ENCODE measurements at regions of chr10 and their contacts with region 1.

Region 1: GRCh38 chr10:17847585-17848296 is 38.6 kb downstream of the MRC1 start:
- DNase-seq: peak in 1 of 2 experiments; percentile 15
- H3K4me3 ChIP-seq: no peak overlapping the region
- H3K4me1 ChIP-seq: no peaks in the 10 kb centered on the region
- H3K27me3 ChIP-seq: no peaks in the 10 kb centered on the region

Region 2: GRCh38 chr10:17147884-17148489 is 699.8 kb before region 1 on chr10:
- in situ Hi-C with region 1: no loop called
- DNase-seq: no peak
- H3K4me3 ChIP-seq: no peak overlapping the region
- H3K4me1 ChIP-seq: no peaks in the 10 kb centered on the region
- H3K27me3 ChIP-seq: no peaks in the 10 kb centered on the region

Region 3: GRCh38 chr10:18059826-18060559 is 212.3 kb after region 1 on chr10:
- in situ Hi-C with region 1: no loop called
- DNase-seq: no peak
- H3K4me3 ChIP-seq: no peak overlapping the region
- H3K4me1 ChIP-seq: no peaks in the 10 kb centered on the region
- H3K27me3 ChIP-seq: no peaks in the 10 kb centered on the region

Region 4: DNA sequence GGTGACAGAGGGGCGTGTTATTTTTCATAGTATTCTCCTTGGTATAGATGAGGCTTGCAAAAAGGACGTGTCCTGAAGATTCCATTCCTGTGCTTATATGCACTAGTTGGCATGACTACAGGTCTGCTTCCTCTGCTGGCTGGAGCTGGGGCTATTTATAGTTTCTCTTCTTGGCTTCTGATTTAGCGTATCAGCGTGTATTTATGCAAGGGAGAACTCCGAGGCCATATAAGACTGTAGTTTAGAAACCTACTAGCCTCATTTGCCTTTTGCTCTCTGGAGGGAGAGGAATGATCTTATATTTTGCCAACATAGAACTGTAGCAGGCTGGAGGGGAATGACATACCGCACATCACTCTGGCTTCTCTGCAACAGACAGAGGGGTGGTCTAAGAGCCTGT is 332.1 kb after region 1 on chr10:
- in situ Hi-C with region 1: no loop called
- DNase-seq: no peak
- H3K4me3 ChIP-seq: no peak overlapping the region
- H3K4me1 ChIP-seq: no peaks in the 10 kb centered on the region
- H3K27me3 ChIP-seq: no peaks in the 10 kb centered on the region

Region 5: GRCh38 chr10:18214691-18215563 is 367.2 kb after region 1 on chr10:
- in situ Hi-C with region 1: loop called (anchors 10 kb)
- DNase-seq: peak; percentile 65 to 70
- H3K4me3 ChIP-seq: no peak overlapping the region
- H3K4me1 ChIP-seq: peaks cover 15% of the 10 kb centered on the region
- H3K27me3 ChIP-seq: no peaks in the 10 kb centered on the region

Region 6: DNA sequence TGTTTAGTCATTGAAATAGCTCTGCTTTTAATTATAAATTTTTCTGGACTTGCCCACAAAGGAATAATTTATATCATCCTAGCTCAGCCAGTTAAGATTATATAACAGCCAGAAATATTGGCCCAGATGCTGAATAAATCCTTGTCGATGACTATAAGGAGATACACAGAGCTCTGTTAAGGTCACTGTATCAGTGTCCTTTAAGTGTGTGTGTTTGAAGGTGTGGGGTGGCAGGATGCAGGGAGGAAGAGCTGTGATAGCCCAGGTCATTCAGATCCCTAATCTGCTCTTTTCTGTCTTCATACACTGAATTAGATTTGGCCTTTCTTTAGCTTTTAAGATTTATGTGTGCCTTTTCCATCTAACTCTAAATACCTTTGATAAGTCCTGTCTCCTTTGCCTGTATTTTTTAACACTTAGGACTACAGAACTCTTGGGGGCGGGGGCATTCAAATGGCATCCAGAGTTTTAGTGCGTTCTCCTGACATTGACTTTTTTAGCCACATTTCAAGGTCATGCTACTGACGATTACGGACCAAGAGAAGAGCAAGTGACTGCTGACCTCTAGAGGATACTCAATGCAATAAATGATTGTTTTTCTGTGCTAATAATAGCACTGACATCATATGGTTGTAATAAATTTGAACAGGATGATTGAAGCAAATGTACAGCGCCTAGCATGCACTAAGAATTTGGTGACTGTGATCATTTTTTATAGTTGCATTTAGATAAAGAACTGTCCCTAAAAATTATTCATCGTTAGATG is 464.8 kb after region 1 on chr10:
- in situ Hi-C with region 1: no loop called
- DNase-seq: peak; percentile 31 to 73
- H3K4me3 ChIP-seq: no peak overlapping the region
- H3K4me1 ChIP-seq: no peaks in the 10 kb centered on the region
- H3K27me3 ChIP-seq: no peaks in the 10 kb centered on the region

Measured in HAP-1 (cell line).